ENCODE measurements at regions of chr7 and their contacts with region 1.

Region 1: GRCh38 chr7:131107337-131108211 is 220.1 kb upstream of the MKLN1 start:
- DNase-seq: peak; percentile 83
- ATAC-seq: peak; percentile 4
- H3K4me3 ChIP-seq: peak overlapping the region; percentile 80
- H3K27ac ChIP-seq: peak overlapping the region; percentile 86
- H3K4me1 ChIP-seq: peaks cover 7% of the 10 kb centered on the region
- H3K27me3 ChIP-seq: no peaks in the 10 kb centered on the region
- CTCF ChIP-seq: no peak
- POLR2A ChIP-seq: peak; percentile 81
- RAD21 ChIP-seq: peak; percentile 15

Region 2: DNA sequence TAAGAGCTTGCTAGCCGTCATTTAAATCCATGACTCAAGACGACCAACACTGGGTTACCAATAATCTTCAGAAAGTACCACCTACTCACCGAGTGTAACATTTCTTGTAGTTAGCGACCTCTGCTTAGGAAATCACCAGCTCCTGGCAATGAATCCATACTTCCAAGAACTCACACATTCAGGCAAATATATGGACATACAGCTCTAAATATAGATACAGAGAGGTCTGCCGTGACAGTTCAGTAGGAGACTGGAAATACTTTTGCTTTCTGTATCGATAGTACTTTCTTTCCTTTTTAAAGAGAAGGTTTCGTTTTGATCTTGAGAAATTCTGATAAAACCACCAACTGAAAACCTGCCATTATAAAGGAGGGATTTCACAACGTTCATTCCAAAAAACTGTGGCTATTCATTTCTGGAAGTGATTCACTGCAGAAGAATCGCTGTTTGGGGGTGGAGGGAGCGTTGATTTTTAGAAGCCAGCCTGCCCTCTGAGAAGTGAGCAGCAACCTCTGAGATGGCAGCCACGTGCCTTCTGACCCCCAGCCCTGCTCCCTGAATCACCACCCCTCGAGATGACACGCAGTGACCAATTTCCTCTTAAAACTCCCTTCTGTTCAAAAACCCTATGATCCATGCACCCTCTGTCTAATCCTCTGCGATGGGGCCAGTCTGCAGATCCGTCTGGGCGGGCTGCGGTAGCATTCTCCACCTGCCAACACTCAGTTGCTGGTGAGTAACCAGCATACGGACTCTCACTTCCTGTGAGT is 194.5 kb before region 1 on chr7:
- CTCF ChIA-PET with region 1: no interaction called
- POLR2A ChIA-PET with region 1: no interaction called
- dilution Hi-C with region 1: no loop called
- in situ Hi-C with region 1: no loop called
- intact Hi-C with region 1: loop called (anchors 5 kb)
- DNase-seq: peak; percentile 99
- ATAC-seq: peak; percentile 57
- H3K4me3 ChIP-seq: peak overlapping the region; percentile 87
- H3K27ac ChIP-seq: peak overlapping the region; percentile 92
- H3K4me1 ChIP-seq: peaks cover 30% of the 10 kb centered on the region
- H3K27me3 ChIP-seq: no peaks in the 10 kb centered on the region
- CTCF ChIP-seq: no peak
- POLR2A ChIP-seq: peak; percentile 80
- RAD21 ChIP-seq: peak; percentile 15; the same call in 1 of the 2 replicates

Region 3: DNA sequence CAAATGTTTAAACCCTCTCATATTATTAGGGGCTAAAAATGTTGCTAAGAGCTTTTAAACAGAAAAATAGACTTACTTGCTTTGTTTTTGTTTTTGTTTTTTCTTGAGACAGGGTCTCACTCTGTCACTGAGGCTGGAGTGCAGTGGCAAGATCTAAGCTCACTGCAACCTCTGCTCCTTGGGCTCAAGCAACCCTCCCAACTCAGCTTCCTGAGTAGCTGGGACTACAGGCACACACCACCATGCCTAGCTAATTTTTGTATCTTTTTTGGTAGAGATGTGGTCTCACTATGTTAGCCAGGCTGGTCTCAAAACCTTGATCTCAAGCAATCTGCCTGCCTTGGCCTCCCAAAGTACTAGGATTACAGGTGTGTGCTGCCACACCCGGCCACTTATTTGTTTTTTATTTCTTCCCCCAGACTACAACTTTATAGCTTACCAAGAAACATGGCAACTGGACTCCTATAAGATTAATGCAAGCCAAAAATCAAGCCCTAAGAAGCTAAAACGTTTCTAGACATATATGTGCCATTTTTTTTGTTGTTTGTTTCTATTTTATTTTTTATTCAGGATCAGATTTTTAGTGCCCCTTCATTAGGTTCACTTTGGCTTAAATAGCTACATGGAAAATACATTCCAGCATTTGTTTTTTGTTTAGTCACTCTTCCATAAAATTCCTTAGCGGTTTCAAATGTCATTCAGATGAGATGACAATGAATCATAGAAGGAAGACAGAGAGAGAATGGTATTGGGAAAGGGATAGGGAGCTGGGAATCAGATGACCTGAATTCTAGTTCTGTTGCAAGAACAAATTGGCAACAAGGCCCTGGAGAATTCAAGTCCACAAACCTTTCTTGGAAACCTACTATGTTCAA is 56.7 kb after region 1 on chr7:
- CTCF ChIA-PET with region 1: interaction called, 3 read pairs
- POLR2A ChIA-PET with region 1: no interaction called
- dilution Hi-C with region 1: no loop called
- in situ Hi-C with region 1: no loop called
- intact Hi-C with region 1: loop called (anchors 2 kb)
- DNase-seq: peak; percentile 81
- ATAC-seq: peak; percentile 22; the same call in 1 of the 2 replicates
- H3K4me3 ChIP-seq: no peak overlapping the region
- H3K27ac ChIP-seq: no peak overlapping the region; the same call in 1 of the 2 replicates
- H3K4me1 ChIP-seq: peaks cover 10% of the 10 kb centered on the region; the same call in 1 of the 2 replicates
- H3K27me3 ChIP-seq: no peaks in the 10 kb centered on the region
- CTCF ChIP-seq: no peak
- POLR2A ChIP-seq: no peak
- RAD21 ChIP-seq: no peak

Region 4: DNA sequence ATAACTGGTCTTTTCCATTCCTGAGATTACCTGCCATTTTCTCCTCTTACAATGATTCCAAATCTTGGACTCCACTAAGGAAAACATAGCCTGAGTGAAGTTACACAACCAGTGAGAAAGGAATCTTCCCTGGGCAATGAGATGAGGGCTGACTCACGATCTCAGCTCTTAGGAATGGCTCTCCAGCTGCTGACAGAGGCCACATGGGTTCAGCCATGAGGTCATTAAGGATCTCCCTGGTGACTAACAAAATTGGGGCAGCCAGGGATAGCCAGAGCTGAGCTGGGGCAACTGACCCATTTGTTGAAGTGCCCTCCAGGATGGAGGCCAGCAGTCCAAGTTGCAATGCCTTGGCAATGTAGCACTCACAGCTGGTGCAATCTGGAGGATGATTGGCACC is 141.4 kb after region 1 on chr7:
- CTCF ChIA-PET with region 1: no interaction called
- POLR2A ChIA-PET with region 1: interaction called, 3 read pairs
- dilution Hi-C with region 1: no loop called
- in situ Hi-C with region 1: no loop called
- intact Hi-C with region 1: loop called (anchors 5 kb)
- DNase-seq: peak; percentile 99
- ATAC-seq: peak; percentile 90
- H3K4me3 ChIP-seq: no peak overlapping the region
- H3K27ac ChIP-seq: peak overlapping the region; percentile 15; the same call in 1 of the 2 replicates
- H3K4me1 ChIP-seq: peaks cover 19% of the 10 kb centered on the region
- H3K27me3 ChIP-seq: no peaks in the 10 kb centered on the region
- CTCF ChIP-seq: no peak
- POLR2A ChIP-seq: peak; percentile 39; the same call in 1 of the 2 replicates
- RAD21 ChIP-seq: peak; percentile 26; the same call in 1 of the 2 replicates

Region 5: GRCh38 chr7:131424219-131424822 is 316.7 kb after region 1 on chr7:
- CTCF ChIA-PET with region 1: no interaction called
- POLR2A ChIA-PET with region 1: no interaction called
- dilution Hi-C with region 1: no loop called
- in situ Hi-C with region 1: no loop called
- intact Hi-C with region 1: loop called (anchors 1 kb)
- DNase-seq: peak; percentile 58
- ATAC-seq: peak; percentile 87
- H3K4me3 ChIP-seq: no peak overlapping the region
- H3K27ac ChIP-seq: no peak overlapping the region
- H3K4me1 ChIP-seq: no peaks in the 10 kb centered on the region
- H3K27me3 ChIP-seq: no peaks in the 10 kb centered on the region
- CTCF ChIP-seq: peak; percentile 64
- POLR2A ChIP-seq: no peak
- RAD21 ChIP-seq: peak; percentile 66

Region 6: DNA sequence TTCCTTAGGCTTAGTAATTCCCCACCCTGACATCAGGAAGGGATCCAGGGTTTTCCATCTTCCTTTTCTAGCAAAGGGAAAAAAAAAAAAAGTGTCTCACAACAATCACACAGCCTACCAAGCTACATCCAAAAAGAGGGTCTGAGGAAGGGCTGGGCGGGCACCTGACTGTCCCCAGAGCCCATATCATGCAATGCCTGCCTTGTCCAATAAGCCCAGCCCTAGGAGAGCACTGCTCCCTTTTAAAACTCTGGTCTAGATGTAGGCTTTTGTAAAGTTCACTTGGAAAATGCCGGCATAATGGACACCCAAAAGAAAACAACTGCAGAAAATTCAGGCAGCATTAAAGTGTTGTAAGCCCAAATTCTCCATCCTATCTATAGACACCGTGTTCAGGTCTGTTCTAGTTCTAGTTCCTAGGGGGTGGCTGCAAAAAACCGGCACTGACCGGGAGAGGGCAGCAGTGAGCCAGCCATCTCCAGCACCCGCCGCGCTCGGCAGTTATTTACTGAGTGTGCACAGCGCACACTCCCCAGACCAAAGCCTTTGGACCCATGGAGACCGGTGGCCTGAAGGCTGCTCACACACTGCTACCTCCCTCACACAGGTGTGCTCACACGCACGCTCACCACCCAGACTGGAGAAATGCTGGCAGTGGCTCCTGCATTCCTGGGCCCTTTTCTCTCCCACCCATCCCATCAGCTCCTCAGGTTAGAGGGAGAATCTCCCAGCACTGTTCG is 400.2 kb after region 1 on chr7:
- CTCF ChIA-PET with region 1: no interaction called
- POLR2A ChIA-PET with region 1: no interaction called
- dilution Hi-C with region 1: no loop called
- in situ Hi-C with region 1: no loop called
- intact Hi-C with region 1: loop called (anchors 2 kb)
- DNase-seq: peak; percentile 60
- ATAC-seq: peak; percentile 94
- H3K4me3 ChIP-seq: no peak overlapping the region
- H3K27ac ChIP-seq: no peak overlapping the region
- H3K4me1 ChIP-seq: peaks cover 7% of the 10 kb centered on the region
- H3K27me3 ChIP-seq: no peaks in the 10 kb centered on the region; the same call in 1 of the 2 replicates
- CTCF ChIP-seq: peak; percentile 93
- POLR2A ChIP-seq: no peak
- RAD21 ChIP-seq: peak; percentile 89

Measured in IMR-90 (cell line).